Esophagus squamous epithelium (tissue), 5 donors: ENCODE measurements at regions of chr14 and their contacts with region 1.

Region 1: GRCh38 chr14:63388763-63389431 is 70.2 kb upstream of the GPHB5 start:
- DNase-seq: no peak
- H3K4me3 ChIP-seq: no peak overlapping the region
- H3K27ac ChIP-seq: no peak overlapping the region
- H3K4me1 ChIP-seq: no peaks in the 10 kb centered on the region
- H3K27me3 ChIP-seq: no peaks in the 10 kb centered on the region
- CTCF ChIP-seq: peak; percentile 49 to 83 (median 78)
- POLR2A ChIP-seq: no peak

Region 2: GRCh38 chr14:63229330-63230059 is 159.4 kb before region 1 on chr14:
- intact Hi-C with region 1: no loop called
- DNase-seq: no peak
- H3K4me3 ChIP-seq: no peak overlapping the region
- H3K27ac ChIP-seq: no peak overlapping the region
- H3K4me1 ChIP-seq: peaks cover 0 to under 1% (median 0%) of the 10 kb centered on the region in 3 donors
- H3K27me3 ChIP-seq: no peaks in the 10 kb centered on the region
- CTCF ChIP-seq: no peak
- POLR2A ChIP-seq: no peak

Region 3: DNA sequence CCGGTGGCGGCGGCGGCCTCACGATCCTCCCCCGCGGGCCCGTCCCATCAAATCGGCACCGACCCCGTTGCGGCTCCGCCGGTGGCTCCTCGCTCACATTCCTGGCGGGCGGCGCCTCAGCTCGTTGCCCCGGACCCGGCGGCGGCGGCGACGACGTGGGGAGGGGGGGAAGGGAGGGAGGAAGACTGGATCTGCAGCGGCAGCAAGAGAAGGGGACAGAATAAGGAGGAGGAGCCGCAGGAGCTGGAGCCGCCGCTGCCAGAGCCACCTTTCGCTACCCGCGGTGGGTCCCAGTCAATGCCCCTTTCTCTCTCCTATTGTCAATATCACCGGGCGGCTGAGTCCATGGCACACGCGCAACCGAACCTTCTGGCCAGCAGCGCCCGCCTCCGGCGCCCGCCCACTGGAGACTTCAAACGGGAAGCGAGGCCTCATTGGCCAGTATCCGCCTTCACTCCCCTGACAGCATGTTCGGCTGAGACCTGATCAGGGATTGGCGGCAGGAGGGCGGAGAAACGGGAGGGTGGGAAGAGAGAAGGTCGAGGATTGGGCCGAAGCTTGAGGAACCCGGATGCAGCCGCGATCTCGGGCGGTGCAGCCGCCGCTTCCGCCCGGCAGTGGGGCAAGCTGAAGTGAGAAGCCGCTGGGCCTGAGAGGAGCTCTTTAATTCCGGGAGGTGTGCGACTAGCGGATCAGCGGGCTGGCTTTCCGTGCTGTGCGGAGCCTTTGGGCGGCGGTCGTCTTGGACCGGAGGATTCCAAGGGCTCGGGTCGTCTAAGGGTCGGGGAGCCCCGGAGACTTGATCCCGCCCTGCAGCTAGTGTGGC is 154.3 kb after region 1 on chr14 and contains the start of gene PPP2R5E:
- intact Hi-C with region 1: loop called (anchors 5 kb)
- DNase-seq: peak; percentile 87
- H3K4me3 ChIP-seq: peak within 1 kb of the TSS; percentile 78 to 89 (median 86)
- H3K27ac ChIP-seq: peak within 1 kb of the TSS; percentile 91 to 97 (median 94)
- H3K4me1 ChIP-seq: peaks cover 0 to 36% (median 14%) of the 10 kb centered on the region in 3 donors
- H3K27me3 ChIP-seq: no peaks in the 10 kb centered on the region
- CTCF ChIP-seq: peak in 1 of 6 experiments; percentile 21
- POLR2A ChIP-seq: peak in 2 of 4 donors; percentile 81 to 85
- total RNA-seq, gene PPP2R5E: 18.9 to 31.2 (median 26.0) TPM

Region 4: GRCh38 chr14:63760014-63760413 is 371.1 kb after region 1 on chr14:
- intact Hi-C with region 1: loop called (anchors 10 kb)
- DNase-seq: no peak
- H3K4me3 ChIP-seq: no peak overlapping the region
- H3K27ac ChIP-seq: peak overlapping the region in 1 of 4 donors; percentile 49
- H3K4me1 ChIP-seq: no peaks in the 10 kb centered on the region
- H3K27me3 ChIP-seq: no peaks in the 10 kb centered on the region
- CTCF ChIP-seq: no peak
- POLR2A ChIP-seq: no peak